ENCODE measurements at regions of chr7 and their contacts with region 1.

Region 1: GRCh38 chr7:116671681-116672595 is at the start of gene MET:
- DNase-seq: peak; percentile 91
- H3K4me3 ChIP-seq: peak within 1 kb of the TSS; percentile 5 to 56 (median 49)
- H3K27ac ChIP-seq: peak within 1 kb of the TSS; percentile 75 to 86 (median 79)
- H3K4me1 ChIP-seq: peaks cover 8 to 13% of the 10 kb centered on the region in 2 donors
- H3K27me3 ChIP-seq: no peaks in the 10 kb centered on the region
- CTCF ChIP-seq: peak; percentile 12 to 89 (median 68)
- POLR2A ChIP-seq: peak in 1 of 2 donors; percentile 74
- total RNA-seq, gene MET: 41.5 to 59.6 (median 52.7) TPM

Region 2: GRCh38 chr7:116786791-116787443 is 115.0 kb after region 1 on chr7:
- intact Hi-C with region 1: loop called (anchors 10 kb)
- DNase-seq: peak; percentile 29 to 37
- H3K4me3 ChIP-seq: no peak overlapping the region
- H3K27ac ChIP-seq: no peak overlapping the region
- H3K4me1 ChIP-seq: no peaks in the 10 kb centered on the region
- H3K27me3 ChIP-seq: no peaks in the 10 kb centered on the region
- CTCF ChIP-seq: peak in 4 of 6 experiments; percentile 53 to 81 (median 62)
- POLR2A ChIP-seq: no peak